ENCODE measurements at regions of chr15 and their contacts with region 1.

Region 1: DNA sequence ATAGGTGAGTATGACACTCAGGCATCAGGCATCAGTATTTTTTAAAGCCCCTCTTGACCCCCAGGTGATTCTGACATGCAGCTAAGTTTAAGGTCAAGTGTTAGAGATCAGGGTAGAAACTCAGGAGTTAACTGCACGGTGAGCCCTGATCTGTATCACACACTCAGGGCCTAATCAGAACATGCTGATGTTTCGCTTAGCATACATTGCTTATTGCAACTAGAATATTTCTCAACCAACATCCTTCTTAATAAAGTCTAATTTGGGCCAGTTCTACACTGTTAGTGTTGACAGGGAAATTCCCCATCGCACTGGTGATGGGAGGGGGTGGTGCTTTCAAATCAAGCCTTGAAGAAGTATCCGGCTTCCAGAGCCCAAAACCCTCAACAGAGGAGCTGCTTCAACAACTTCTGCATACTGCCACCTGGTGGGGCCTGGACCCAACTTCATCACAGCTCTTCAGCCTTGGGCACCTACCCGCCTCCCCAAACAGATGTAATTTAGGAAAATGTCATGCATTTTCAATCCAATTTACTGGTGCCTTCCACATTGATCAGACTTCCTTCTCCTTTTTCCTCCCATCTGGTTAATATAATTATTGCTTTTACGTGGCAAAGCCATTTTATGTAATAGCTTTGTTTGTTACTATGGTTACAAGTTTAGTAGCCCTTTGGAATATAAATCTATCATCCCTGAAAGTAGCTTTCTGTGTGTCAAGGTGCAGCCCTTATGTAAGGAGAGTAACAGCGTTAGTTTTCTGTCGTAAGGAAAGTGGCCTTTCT is 312.2 kb downstream of the RORA start:
- DNase-seq: peak; percentile 7
- H3K4me3 ChIP-seq: no peak overlapping the region
- H3K27me3 ChIP-seq: no peaks in the 10 kb centered on the region
- CTCF ChIP-seq: peak; percentile 87

Region 2: GRCh38 chr15:60585743-60586708 is 330.8 kb before region 1 on chr15:
- CTCF ChIA-PET with region 1: interaction called, 55 read pairs
- POLR2A ChIA-PET with region 1: no interaction called
- DNase-seq: no peak
- H3K4me3 ChIP-seq: no peak overlapping the region
- H3K27me3 ChIP-seq: 0 out of 2 replicates have a peak, but pooled peaks cover 1% of the 10 kb centered on the region
- CTCF ChIP-seq: peak; percentile 79

Region 3: DNA sequence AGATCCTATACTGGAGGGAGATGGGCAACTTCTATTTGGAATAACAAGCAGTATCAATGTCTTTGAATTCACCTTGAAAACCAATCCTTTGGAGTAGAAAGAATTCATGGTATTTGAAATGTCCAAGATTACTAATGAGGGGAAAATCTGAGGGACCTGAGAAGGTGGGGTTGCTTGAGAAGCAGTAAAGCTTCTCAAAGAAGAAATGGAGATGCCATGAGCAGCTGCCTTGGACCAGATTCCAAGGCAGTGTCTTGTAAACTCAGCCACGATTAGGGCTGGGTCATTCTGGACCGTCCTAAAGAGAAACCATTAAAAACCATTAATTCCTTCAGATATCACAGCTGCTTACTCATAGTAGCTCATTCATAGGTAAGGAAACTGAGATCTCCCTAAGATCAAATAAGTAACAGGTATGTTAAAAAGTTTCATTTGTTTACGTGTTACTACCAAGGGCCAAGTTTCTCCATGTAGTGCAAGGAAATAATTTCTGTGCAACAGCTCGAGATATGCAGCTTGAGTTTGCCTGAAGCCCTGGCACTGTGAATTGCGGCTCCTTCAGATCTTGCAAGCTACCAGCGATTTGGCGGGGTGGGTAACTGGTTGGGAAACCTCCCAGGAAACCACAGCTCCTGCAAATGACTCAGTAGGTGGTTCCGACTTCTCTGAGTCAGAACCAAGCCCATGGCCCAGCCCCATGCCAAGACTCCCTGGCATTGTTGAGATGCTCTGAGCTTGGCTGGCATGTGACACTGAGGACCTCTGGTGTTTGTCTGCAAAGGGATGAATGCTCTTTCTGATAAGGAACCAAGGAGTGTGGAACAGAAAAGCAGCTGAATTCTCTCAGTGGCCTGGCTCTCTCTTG is 15.4 kb after region 1 on chr15:
- CTCF ChIA-PET with region 1: interaction called, 22 read pairs
- POLR2A ChIA-PET with region 1: no interaction called
- DNase-seq: no peak
- H3K4me3 ChIP-seq: no peak overlapping the region
- H3K27me3 ChIP-seq: no peaks in the 10 kb centered on the region
- CTCF ChIP-seq: no peak

Region 4: GRCh38 chr15:61051569-61052031 is 134.7 kb after region 1 on chr15:
- CTCF ChIA-PET with region 1: interaction called, 19 read pairs
- POLR2A ChIA-PET with region 1: no interaction called
- DNase-seq: peak; percentile 54
- H3K4me3 ChIP-seq: no peak overlapping the region
- H3K27me3 ChIP-seq: no peaks in the 10 kb centered on the region; the same call in 1 of the 2 replicates
- CTCF ChIP-seq: peak; percentile 85

Measured in BJ (cell line).